ENCODE measurements at regions of chr15 and their contacts with region 1.

Region 1: GRCh38 chr15:54347082-54347827 is 369.0 kb downstream of the UNC13C start:
- DNase-seq: no peak
- ATAC-seq: no peak
- H3K4me3 ChIP-seq: no peak overlapping the region
- H3K27ac ChIP-seq: no peak overlapping the region
- H3K4me1 ChIP-seq: no peaks in the 10 kb centered on the region
- H3K27me3 ChIP-seq: no peaks in the 10 kb centered on the region
- CTCF ChIP-seq: no peak

Region 2: GRCh38 chr15:54304321-54304720 is 42.9 kb before region 1 on chr15:
- intact Hi-C with region 1: no loop called
- DNase-seq: no peak
- ATAC-seq: no peak
- H3K4me3 ChIP-seq: no peak overlapping the region
- H3K27ac ChIP-seq: no peak overlapping the region
- H3K4me1 ChIP-seq: no peaks in the 10 kb centered on the region
- H3K27me3 ChIP-seq: no peaks in the 10 kb centered on the region
- CTCF ChIP-seq: no peak

Region 3: DNA sequence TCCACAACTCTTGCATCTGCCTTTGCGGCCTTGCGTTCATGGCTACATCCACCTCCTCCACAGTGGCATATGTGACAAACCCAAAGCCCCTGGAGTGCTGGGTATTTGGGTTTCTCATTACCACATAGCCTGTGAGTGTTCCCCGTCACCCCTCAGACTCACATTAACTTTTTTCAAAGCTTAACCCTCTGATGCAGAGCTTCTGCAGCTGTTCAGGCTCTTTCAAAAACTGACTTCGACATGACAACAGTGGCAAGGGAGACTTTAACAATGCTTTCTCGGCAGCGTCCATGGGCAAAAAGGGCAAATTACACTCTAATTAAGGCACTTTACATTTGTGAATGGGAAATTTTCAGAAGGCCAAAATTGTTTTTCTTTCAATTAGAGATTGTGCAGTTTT is 25.8 kb before region 1 on chr15:
- intact Hi-C with region 1: loop called in 1 of 10 experiments (anchors 1 kb)
- DNase-seq: no peak
- ATAC-seq: no peak
- H3K4me3 ChIP-seq: no peak overlapping the region
- H3K27ac ChIP-seq: no peak overlapping the region
- H3K4me1 ChIP-seq: no peaks in the 10 kb centered on the region
- H3K27me3 ChIP-seq: no peaks in the 10 kb centered on the region
- CTCF ChIP-seq: no peak

Region 4: DNA sequence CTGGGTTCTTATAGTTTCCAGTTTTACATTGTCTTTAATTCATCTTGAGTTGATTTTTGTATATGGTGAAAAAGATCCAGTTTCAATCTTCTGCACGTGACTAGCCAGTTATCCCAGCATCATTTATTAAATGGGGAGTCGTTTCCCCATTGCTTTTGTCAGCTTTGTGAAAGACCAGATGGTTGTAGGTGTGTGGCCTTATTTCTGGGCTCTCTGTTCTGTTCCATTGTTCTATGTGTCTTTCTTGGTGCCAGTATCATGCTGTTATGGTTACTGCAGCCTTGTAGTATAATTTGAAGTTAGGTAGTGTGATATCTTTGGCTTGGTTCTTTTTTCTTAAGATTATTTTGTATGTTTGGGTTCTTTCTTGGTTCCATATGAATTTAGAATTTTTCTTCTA is 63.2 kb after region 1 on chr15:
- intact Hi-C with region 1: loop called in 1 of 10 experiments (anchors 10 kb)
- DNase-seq: no peak
- ATAC-seq: no peak
- H3K4me3 ChIP-seq: no peak overlapping the region
- H3K27ac ChIP-seq: no peak overlapping the region
- H3K4me1 ChIP-seq: no peaks in the 10 kb centered on the region
- H3K27me3 ChIP-seq: no peaks in the 10 kb centered on the region
- CTCF ChIP-seq: no peak